PC-3 (cell line): ENCODE measurements at regions of chr9 and their contacts with region 1.

Region 1: DNA sequence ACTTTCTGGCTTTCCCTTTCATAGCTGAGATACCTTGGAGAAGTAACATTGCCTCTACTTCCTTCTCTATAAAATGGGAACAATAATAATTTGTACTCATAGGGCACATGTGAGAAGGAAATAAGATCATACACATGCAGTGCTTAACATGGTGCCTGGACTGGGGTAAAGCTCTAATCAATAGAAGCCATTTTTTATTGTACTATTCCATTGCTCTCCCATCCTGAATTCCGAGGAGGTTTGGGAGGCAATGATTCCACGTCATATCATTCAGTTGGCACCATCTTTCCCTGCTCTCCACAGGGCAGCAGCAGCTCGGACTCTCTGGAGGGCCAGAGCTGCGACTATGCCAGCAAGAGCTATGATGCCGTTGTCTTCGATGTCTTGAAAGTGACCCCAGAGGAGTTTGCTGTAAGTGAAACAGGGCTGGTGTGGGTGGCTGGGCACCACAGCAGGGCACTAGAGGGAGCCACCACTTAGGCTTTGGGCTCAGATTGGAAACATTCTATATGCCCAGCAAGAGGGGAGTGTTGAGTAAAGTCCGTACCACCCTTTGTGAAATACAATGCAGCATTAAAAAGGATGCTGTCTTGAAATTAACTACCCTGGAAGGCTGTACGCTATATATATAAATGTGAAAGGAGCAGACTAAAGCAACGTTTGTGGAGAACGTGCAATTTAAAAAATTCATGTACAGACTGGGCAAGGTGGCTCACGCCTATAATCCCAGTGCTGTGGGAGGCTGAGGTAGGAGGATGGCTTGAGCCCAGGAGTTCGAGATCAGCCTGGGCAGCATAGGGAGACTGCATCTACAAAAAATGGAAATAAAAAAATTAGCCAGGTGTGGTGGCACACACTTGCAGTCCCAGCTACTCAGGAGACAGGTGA is 51.2 kb downstream of the RALGPS1 start:
- DNase-seq: peak; percentile 55
- ATAC-seq: peak; percentile 93
- H3K4me3 ChIP-seq: no peak overlapping the region
- H3K27ac ChIP-seq: 0 out of 2 replicates have a peak overlapping the region, but pooled peaks have one; percentile 12
- H3K4me1 ChIP-seq: peaks cover 16% of the 10 kb centered on the region
- H3K27me3 ChIP-seq: no peaks in the 10 kb centered on the region
- CTCF ChIP-seq: peak; percentile 92

Region 2: DNA sequence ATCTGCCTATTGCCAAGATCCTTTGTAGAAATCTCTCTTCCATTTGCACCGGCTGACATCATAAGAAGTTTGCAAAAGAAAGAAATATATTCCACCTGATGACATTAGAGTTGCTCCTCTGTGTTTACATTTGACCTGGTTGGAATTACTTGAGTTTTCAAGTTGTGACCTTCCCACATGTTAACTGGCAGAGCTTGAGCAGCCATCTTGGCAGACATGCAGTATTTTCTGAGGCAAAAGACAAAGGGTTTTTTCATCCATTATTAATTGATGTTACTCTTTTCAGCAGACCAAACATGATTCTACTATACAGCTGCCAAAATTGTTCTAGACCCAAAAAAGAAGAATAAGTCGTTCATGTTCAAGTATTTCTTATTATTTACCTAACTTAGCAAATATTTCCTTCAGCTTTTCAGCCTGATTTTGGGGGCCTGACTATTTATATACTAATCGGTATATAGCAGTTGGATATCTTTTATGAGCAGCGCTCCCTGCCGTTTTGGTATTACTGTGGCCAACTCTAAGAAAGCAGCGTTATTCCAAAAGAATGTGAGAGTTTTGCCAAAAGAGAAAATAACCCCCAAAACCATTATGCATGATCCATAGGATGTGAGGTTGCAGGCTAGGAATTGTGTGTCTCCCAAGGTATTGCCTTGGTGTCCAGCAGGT is 1005.7 kb before region 1 on chr9:
- CTCF ChIA-PET with region 1: no interaction called
- POLR2A ChIA-PET with region 1: no interaction called
- intact Hi-C with region 1: no loop called
- DNase-seq: no peak
- ATAC-seq: no peak
- H3K4me3 ChIP-seq: no peak overlapping the region
- H3K27ac ChIP-seq: no peak overlapping the region
- H3K4me1 ChIP-seq: peaks cover 20% of the 10 kb centered on the region
- H3K27me3 ChIP-seq: no peaks in the 10 kb centered on the region
- CTCF ChIP-seq: no peak

Region 3: GRCh38 chr9:126893079-126893478 is 72.7 kb before region 1 on chr9:
- CTCF ChIA-PET with region 1: no interaction called
- POLR2A ChIA-PET with region 1: no interaction called
- intact Hi-C with region 1: no loop called
- DNase-seq: peak; percentile 13
- ATAC-seq: no peak
- H3K4me3 ChIP-seq: no peak overlapping the region
- H3K27ac ChIP-seq: no peak overlapping the region
- H3K4me1 ChIP-seq: 0 out of 2 replicates have a peak, but pooled peaks cover 4% of the 10 kb centered on the region
- H3K27me3 ChIP-seq: no peaks in the 10 kb centered on the region
- CTCF ChIP-seq: peak; percentile 51

Region 4: DNA sequence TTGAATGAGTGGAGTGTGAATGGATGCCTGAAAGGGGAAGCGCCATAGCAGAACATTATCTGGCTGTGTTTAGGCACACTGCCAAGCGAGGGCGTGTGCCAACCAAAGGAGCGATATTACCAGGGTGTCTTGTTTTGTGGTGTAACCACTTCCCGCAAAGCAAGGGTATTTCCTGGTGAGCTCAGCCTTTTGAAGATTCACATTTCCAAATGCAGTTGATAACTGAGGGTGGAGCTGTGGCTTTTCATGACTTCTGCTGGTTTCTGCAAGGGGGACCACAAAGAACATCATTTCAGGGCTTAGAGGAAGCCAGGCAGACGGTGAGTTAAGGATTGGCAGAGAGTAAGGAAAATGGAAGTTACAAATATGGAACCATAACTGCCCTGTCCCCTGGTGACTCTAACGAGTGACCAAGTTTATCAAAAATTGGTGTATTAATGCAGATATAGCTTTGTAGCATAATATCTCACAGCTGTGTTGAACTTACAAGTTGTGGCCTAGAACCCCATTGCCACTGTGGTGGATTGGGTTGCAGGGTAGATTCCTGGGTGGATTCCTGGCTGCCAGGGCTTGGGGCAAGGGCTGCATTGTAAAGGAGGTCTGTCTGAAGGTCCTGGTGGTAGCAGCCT is 20.2 kb after region 1 on chr9:
- CTCF ChIA-PET with region 1: interaction called, 3 read pairs
- POLR2A ChIA-PET with region 1: interaction called, 15 read pairs
- intact Hi-C with region 1: no loop called
- DNase-seq: peak; percentile 97
- ATAC-seq: peak; percentile 70
- H3K4me3 ChIP-seq: peak overlapping the region; percentile 53
- H3K27ac ChIP-seq: peak overlapping the region; percentile 98
- H3K4me1 ChIP-seq: peaks cover 41% of the 10 kb centered on the region
- H3K27me3 ChIP-seq: no peaks in the 10 kb centered on the region
- CTCF ChIP-seq: 0 out of 2 replicates have a peak, but pooled peaks have one; percentile 23

Region 5: GRCh38 chr9:127021664-127022363 is 56.0 kb after region 1 on chr9:
- CTCF ChIA-PET with region 1: no interaction called
- POLR2A ChIA-PET with region 1: no interaction called
- intact Hi-C with region 1: loop called (anchors 1 kb)
- DNase-seq: no peak
- ATAC-seq: no peak
- H3K4me3 ChIP-seq: no peak overlapping the region
- H3K27ac ChIP-seq: no peak overlapping the region
- H3K4me1 ChIP-seq: peaks cover 32% of the 10 kb centered on the region
- H3K27me3 ChIP-seq: no peaks in the 10 kb centered on the region
- CTCF ChIP-seq: no peak

Region 6: GRCh38 chr9:127112056-127112455 is 146.3 kb after region 1 on chr9:
- CTCF ChIA-PET with region 1: no interaction called
- POLR2A ChIA-PET with region 1: interaction called, 15 read pairs
- intact Hi-C with region 1: no loop called
- DNase-seq: no peak
- ATAC-seq: no peak
- H3K4me3 ChIP-seq: no peak overlapping the region
- H3K27ac ChIP-seq: peak overlapping the region; percentile 46; the same call in 1 of the 2 replicates
- H3K4me1 ChIP-seq: peaks cover 29% of the 10 kb centered on the region
- H3K27me3 ChIP-seq: no peaks in the 10 kb centered on the region
- CTCF ChIP-seq: no peak